ENCODE measurements at regions of chr2 and their contacts with region 1.

Region 1: DNA sequence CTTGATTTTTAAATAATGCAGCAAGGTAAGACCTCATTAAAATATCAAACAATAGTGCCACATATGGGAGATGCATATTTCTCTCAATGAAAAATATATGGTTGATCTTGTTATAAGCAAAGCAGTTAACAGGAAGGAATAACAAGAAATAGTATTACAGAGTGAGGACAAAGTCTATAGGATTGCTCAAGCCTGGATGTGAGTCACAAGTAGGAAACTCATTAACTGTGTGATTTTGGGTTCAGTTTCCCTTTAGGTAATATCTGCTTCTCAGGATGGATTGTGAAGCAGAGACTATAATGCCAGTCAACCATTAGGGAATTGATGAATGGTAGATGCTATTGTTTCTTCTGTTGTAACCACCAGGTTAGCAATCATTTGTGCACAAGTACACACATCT is 42.9 kb upstream of the SPHKAP start:
- DNase-seq: no peak
- H3K4me3 ChIP-seq: no peak overlapping the region
- H3K27ac ChIP-seq: no peak overlapping the region
- H3K4me1 ChIP-seq: no peaks in the 10 kb centered on the region
- H3K27me3 ChIP-seq: no peaks in the 10 kb centered on the region
- CTCF ChIP-seq: no peak
- EP300 ChIP-seq: no peak
- POLR2A ChIP-seq: no peak

Region 2: DNA sequence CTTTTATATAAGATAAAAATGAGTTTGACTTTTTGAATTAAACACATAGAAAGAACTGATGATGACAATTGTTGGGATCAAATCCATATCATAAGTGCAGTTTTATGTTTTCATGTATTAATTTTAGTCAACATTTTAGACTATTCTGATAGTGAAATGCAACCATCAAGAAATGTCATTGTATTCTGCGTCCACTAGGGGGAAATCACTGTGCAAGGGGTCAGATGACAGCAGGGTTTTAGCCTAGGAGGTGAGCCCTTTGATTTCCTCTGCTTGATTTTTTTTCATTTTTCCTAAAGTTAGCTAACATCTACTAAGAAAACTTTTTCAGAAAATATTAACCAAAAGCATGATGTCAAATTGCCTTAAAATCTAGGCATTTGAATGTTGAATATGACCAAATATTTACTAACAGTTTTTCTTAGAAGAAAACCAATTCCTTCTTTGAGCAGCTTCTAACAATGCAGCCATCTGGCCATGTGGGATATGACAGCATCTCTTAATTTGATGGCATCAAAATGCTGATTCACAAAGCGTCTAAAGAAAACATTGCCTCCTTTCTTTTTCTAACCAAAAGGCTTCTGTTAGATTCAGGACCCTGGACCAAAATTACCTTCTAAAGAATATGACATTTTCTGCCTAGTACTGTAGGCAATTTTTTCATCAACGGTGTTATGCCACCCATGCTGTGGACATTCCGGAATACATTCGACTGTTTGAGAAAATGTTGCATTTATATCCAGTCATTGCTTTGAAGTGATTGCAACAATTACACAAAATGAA is 184.5 kb before region 1 on chr2:
- in situ Hi-C with region 1: no loop called
- intact Hi-C with region 1: no loop called
- DNase-seq: no peak
- H3K4me3 ChIP-seq: no peak overlapping the region
- H3K27ac ChIP-seq: no peak overlapping the region
- H3K4me1 ChIP-seq: no peaks in the 10 kb centered on the region
- H3K27me3 ChIP-seq: no peaks in the 10 kb centered on the region
- CTCF ChIP-seq: peak; percentile 32 to 60 (median 43)
- EP300 ChIP-seq: no peak
- POLR2A ChIP-seq: no peak

Region 3: GRCh38 chr2:228303946-228304345 is 79.5 kb after region 1 on chr2:
- in situ Hi-C with region 1: no loop called
- intact Hi-C with region 1: loop called (anchors 2 kb)
- DNase-seq: no peak
- H3K4me3 ChIP-seq: no peak overlapping the region
- H3K27ac ChIP-seq: no peak overlapping the region
- H3K4me1 ChIP-seq: no peaks in the 10 kb centered on the region
- H3K27me3 ChIP-seq: no peaks in the 10 kb centered on the region
- CTCF ChIP-seq: no peak
- EP300 ChIP-seq: no peak
- POLR2A ChIP-seq: no peak

Measured in transverse colon (tissue), 4 donors.